Heart right ventricle (tissue), 16 donors: ENCODE measurements at regions of chr4 and their contacts with region 1.

Region 1: DNA sequence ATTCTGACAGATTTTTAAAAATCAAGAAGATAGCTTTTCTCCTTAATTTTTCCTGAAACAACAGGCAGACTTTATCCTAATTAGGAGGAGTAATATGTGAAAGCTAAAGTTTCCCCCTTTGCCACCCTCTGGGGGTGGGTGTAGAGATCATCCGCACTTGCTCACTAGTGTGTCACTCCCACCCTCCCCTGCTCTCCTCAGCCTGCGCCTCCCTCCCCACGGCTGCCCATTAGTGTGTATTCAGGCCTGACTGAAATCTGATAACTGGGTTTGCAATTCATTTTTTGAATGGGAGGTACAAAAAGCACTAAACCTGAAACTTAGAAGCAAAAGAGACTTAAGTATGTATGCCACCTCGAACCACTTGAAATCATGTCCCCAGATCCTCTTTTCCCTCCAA is 110.4 kb upstream of the TRIM2 start:
- DNase-seq: no peak
- ATAC-seq: no peak
- H3K4me3 ChIP-seq: no peak overlapping the region
- H3K27ac ChIP-seq: no peak overlapping the region
- H3K4me1 ChIP-seq: no peaks in the 10 kb centered on the region
- H3K27me3 ChIP-seq: no peaks in the 10 kb centered on the region
- CTCF ChIP-seq: no peak

Region 2: GRCh38 chr4:152983774-152984411 is 109.9 kb before region 1 on chr4:
- intact Hi-C with region 1: no loop called
- DNase-seq: no peak
- ATAC-seq: no peak
- H3K4me3 ChIP-seq: no peak overlapping the region
- H3K27ac ChIP-seq: no peak overlapping the region
- H3K4me1 ChIP-seq: no peaks in the 10 kb centered on the region
- H3K27me3 ChIP-seq: peaks cover 0 to 29% (median 0%) of the 10 kb centered on the region in 7 donors
- CTCF ChIP-seq: no peak

Region 3: GRCh38 chr4:153122855-153123254 is 29.1 kb after region 1 on chr4:
- intact Hi-C with region 1: loop called in 2 of 10 experiments (anchors 2 to 5 kb)
- DNase-seq: no peak
- ATAC-seq: no peak
- H3K4me3 ChIP-seq: no peak overlapping the region
- H3K27ac ChIP-seq: no peak overlapping the region
- H3K4me1 ChIP-seq: peaks cover 0 to 4% (median 0%) of the 10 kb centered on the region in 9 donors
- H3K27me3 ChIP-seq: peaks cover 0 to 8% (median 0%) of the 10 kb centered on the region in 7 donors
- CTCF ChIP-seq: no peak

Region 4: GRCh38 chr4:155094201-155094820 is 2000.5 kb after region 1 on chr4:
- intact Hi-C with region 1: no loop called
- DNase-seq: no peak
- ATAC-seq: no peak
- H3K4me3 ChIP-seq: no peak overlapping the region
- H3K27ac ChIP-seq: no peak overlapping the region
- H3K4me1 ChIP-seq: no peaks in the 10 kb centered on the region
- H3K27me3 ChIP-seq: no peaks in the 10 kb centered on the region
- CTCF ChIP-seq: no peak